ENCODE measurements at regions of chr10 and their contacts with region 1.

Region 1: GRCh38 chr10:101031128-101031795 is at the starts of genes PDZD7 and SFXN3:
- DNase-seq: peak; percentile 89
- H3K4me3 Mint-ChIP-seq: peak within 1 kb of the TSS; percentile 93
- H3K27ac Mint-ChIP-seq: peak within 1 kb of the TSS; percentile 94
- H3K4me1 Mint-ChIP-seq: peaks cover 31% of the 10 kb centered on the region
- H3K27me3 Mint-ChIP-seq: no peaks in the 10 kb centered on the region
- CTCF ChIP-seq: no peak
- total RNA-seq, gene PDZD7: 0.27 and 0.58 TPM in 2 replicates
- total RNA-seq, gene SFXN3: 39.4 and 55.2 TPM in 2 replicates

Region 2: DNA sequence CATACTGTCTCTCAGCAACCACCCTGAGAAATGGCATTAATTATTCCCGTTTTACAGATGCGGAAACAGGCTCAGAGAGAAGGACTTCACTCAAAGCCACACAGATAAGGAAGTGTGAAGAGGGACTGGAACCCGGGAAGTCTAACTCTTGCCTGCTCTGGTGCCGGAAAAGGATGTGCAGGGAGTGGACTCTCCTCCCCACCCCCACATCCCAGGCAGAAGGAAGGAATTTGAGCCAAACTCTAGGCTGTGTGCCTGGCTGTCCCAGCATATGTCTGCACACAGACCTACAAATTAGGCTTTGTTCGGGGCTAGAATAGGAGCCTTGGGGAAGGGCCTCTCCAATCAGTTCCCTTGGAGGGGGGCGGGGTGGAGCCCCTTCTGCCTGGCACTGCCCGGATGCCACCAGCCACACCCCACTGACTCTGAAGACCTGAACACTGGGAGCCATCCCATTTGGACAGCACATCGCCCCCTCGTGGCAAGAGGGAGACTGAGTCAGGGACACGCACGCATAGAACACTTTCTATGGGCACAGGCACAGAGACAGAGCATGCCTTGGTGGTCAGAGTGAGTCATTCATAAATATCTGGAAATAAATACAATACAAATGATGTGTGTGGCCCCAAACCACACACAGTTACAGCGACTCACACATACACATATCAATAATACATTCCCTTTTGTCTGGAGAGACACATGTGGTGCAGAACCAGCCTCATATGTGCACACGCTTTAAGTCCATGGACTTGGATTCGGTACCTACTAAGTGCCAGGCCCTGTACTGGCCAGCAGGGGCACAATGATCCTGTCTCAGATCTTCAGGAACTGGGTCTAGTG is 18.5 kb before region 1 on chr10:
- CTCF ChIA-PET with region 1: interaction called, 40 read pairs
- POLR2A ChIA-PET with region 1: interaction called, 8 read pairs
- intact Hi-C with region 1: no loop called
- DNase-seq: peak; percentile 95
- H3K4me3 Mint-ChIP-seq: no peak overlapping the region
- H3K27ac Mint-ChIP-seq: peak overlapping the region; percentile 29
- H3K4me1 Mint-ChIP-seq: peaks cover 26% of the 10 kb centered on the region
- H3K27me3 Mint-ChIP-seq: no peaks in the 10 kb centered on the region
- CTCF ChIP-seq: peak; percentile 67

Region 3: DNA sequence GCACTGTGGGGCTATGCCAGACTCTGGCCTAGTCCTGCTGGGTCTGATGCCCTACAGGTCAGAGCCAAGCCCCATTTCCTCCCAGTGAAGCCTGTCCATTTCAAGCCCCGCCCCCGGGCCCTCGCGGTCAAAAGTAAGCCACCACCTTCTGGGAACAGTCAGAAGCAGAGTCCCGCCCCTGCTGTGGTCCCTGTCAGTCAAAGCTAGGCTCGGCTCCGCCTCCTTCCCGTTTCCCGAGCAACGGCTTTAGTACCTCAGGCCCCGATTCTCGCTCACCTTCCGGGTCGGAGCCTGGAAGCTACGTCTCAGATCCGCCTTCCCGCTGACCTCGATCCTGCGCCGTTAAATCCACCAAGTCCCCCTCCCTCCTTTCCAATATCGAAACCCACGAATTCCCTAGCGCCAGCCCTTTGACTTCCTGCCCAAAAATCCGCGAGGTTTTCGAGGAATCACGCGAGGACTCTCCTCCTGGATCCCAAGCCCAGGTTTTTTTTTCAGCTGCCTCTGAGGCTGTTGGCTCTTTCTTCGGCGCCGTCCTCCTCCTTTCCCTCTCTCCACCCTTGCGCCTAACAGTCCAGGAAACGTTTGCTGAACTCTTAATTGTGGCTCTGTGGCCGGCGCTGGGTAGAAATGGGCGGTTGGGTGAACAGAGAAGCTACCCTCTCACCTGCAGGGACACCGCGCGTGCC is 11.5 kb after region 1 on chr10:
- CTCF ChIA-PET with region 1: interaction called, 14 read pairs
- POLR2A ChIA-PET with region 1: interaction called, 82 read pairs
- intact Hi-C with region 1: no loop called
- DNase-seq: peak; percentile 98
- H3K4me3 Mint-ChIP-seq: peak overlapping the region; percentile 98
- H3K27ac Mint-ChIP-seq: peak overlapping the region; percentile 100
- H3K4me1 Mint-ChIP-seq: peaks cover 29% of the 10 kb centered on the region
- H3K27me3 Mint-ChIP-seq: no peaks in the 10 kb centered on the region
- CTCF ChIP-seq: no peak

Region 4: GRCh38 chr10:101050208-101051069 is 19.2 kb after region 1 on chr10:
- CTCF ChIA-PET with region 1: interaction called, 234 read pairs
- POLR2A ChIA-PET with region 1: interaction called, 9 read pairs
- intact Hi-C with region 1: no loop called
- DNase-seq: peak; percentile 64
- H3K4me3 Mint-ChIP-seq: peak overlapping the region; percentile 47
- H3K27ac Mint-ChIP-seq: no peak overlapping the region
- H3K4me1 Mint-ChIP-seq: peaks cover 8% of the 10 kb centered on the region
- H3K27me3 Mint-ChIP-seq: no peaks in the 10 kb centered on the region
- CTCF ChIP-seq: peak; percentile 85

Region 5: GRCh38 chr10:101060036-101060950 is 29.0 kb after region 1 on chr10:
- CTCF ChIA-PET with region 1: interaction called, 234 read pairs
- POLR2A ChIA-PET with region 1: interaction called, 37 read pairs
- intact Hi-C with region 1: loop called (anchors 5 kb)
- DNase-seq: peak; percentile 98
- H3K4me3 Mint-ChIP-seq: peak overlapping the region; percentile 95
- H3K27ac Mint-ChIP-seq: peak overlapping the region; percentile 97
- H3K4me1 Mint-ChIP-seq: peaks cover 20% of the 10 kb centered on the region
- H3K27me3 Mint-ChIP-seq: no peaks in the 10 kb centered on the region
- CTCF ChIP-seq: peak; percentile 84

Measured in MCF 10A (cell line).